ENCODE measurements at regions of chr5 and their contacts with region 1.

Region 1: DNA sequence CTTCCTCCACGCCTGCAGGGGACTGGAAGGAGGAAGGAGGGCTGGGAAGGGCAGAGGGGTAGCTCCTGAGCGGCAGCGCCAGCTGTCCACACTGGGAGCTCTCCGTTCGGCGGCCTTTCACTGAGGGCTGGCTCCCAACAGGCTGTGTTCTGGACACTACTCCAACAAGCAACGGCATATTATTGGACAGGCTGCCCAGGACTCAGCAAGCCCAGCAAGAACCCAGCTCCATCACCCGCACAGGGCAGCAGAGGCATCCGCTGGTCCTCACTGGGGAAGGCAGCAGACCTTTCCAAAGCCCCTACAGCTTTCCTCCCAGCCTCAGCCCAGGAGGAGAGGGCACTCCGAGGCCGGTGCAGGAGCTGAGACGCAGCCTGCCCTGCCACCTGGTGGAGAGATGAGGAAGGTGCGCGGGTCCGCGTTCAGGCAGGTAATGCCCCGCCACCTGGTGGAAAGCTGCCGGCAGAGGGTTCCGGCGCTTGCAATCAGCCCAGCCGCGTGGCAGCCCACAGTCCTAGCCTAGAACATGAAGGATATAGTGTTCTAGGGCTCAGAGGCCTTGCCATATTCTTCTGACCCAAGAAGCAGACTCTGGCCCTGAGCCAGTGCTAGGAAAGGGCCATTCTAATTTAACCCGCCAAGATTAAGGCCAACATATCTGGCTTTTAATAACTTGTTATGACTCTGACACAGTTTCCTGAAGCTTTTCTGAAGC is 74.4 kb downstream of the NRG2 start:
- DNase-seq: peak; percentile 82 to 95 (median 94)
- ATAC-seq: peak; percentile 94 to 95
- H3K4me3 ChIP-seq: no peak overlapping the region
- H3K27ac ChIP-seq: no peak overlapping the region
- H3K4me1 ChIP-seq: peaks cover 3% of the 10 kb centered on the region
- H3K27me3 ChIP-seq: no peaks in the 10 kb centered on the region

Region 2: DNA sequence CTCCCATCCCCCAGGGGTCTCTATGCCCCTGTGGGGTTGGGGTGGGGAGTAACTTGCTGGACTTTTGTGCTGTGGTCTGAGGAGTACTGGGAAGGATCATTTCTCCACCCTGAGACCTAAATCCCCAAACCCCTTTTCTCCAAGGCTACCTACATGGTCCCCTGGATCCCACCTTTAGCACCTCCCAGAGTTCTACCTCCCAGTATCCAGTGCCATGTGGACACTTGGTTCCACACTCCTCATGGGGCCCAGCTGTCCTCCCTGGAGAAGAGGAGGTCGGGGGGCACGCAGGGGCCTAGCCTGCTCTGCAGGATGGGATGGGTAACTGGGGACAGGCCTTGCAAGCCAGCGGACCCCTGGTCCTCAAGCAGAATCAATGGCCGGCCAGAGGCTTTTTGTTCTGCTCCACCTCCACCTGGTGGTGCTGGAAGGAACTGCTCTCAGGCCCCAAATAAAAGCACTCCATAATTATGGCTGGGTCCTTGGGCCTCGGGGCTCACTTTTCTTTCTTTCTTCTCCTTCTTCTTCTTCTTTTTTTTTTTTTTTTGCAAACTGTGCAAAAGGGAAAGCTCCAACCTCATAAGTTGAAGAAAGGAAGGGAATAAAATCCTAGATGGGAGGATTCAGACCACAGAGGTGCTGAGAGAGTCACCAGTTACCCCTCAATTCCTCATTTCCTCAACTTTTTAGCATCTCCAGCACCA is 104.7 kb before region 1 on chr5:
- intact Hi-C with region 1: loop called in 1 of 4 experiments (anchors 5 kb)
- DNase-seq: peak; percentile 62 to 88 (median 81)
- ATAC-seq: peak; percentile 69 to 74
- H3K4me3 ChIP-seq: no peak overlapping the region
- H3K27ac ChIP-seq: no peak overlapping the region
- H3K4me1 ChIP-seq: no peaks in the 10 kb centered on the region
- H3K27me3 ChIP-seq: no peaks in the 10 kb centered on the region